ENCODE measurements at regions of chr11 and their contacts with region 1.

Region 1: DNA sequence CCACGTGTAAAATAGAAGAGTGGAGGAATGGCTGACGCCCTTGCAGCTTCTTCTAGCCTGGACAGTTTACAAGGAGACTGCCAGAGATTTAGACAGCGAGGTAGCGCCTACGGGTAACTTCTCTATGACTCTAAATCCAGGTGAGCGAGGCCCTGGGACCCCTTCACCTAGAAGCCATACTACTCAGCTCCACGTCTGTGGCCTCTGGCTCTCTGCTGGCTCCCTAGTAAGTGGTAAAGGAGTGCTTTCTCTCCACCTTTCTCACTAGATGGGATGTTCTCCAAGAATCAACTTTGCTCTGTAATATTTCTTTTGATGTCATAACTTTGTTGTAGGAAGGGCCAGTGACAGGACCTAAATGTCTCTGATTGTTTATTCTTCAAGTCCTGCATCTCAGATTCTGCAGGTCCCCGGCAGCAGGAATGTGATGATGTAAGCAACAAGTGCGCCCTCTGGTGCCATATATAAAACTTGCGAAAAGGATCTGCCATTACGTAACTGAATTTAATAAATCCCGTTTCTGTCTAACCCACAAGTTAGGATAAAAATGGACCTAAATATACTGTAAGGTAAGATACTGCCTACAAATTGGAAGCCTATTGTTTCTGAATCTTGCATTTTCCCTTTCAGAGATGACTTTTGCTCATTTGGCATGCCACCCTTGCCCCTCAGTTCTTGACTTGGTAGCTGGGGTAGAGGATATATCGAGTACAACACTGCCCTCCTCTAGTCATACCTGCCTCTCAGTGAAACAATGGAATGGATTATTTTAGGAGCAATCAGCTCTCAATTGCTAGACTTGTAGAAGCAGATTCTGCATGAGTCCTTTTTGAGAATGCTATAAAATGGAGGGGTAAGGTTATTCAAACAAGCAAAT is 11.0 kb upstream of the PTPN5 start:
- DNase-seq: peak in 6 of 9 donors; percentile 4 to 47 (median 25)
- ATAC-seq: peak; percentile 49
- H3K4me3 ChIP-seq: no peak overlapping the region
- H3K4me3 Mint-ChIP-seq: peak overlapping the region in 2 of 10 donors; percentile 5 to 21
- H3K27ac ChIP-seq: no peak overlapping the region
- H3K27ac Mint-ChIP-seq: peak overlapping the region in 1 of 9 donors; percentile 72
- H3K4me1 ChIP-seq: no peaks in the 10 kb centered on the region
- H3K4me1 Mint-ChIP-seq: peaks cover 0 to 5% (median 4%) of the 10 kb centered on the region in 7 donors
- H3K27me3 ChIP-seq: no peaks in the 10 kb centered on the region
- H3K27me3 Mint-ChIP-seq: peaks cover 5 to 54% (median 8%) of the 10 kb centered on the region in 5 donors

Region 2: GRCh38 chr11:18775492-18776292 is 26.9 kb before region 1 on chr11:
- CTCF ChIA-PET with region 1: no interaction called
- POLR2A ChIA-PET with region 1: no interaction called
- intact Hi-C with region 1: loop called in 1 of 2 experiments (anchors 1 kb)
- DNase-seq: peak in 4 of 9 donors; percentile 6 to 60 (median 16)
- ATAC-seq: no peak
- H3K4me3 ChIP-seq: no peak overlapping the region
- H3K4me3 Mint-ChIP-seq: no peak overlapping the region
- H3K27ac ChIP-seq: no peak overlapping the region
- H3K27ac Mint-ChIP-seq: no peak overlapping the region
- H3K4me1 ChIP-seq: no peaks in the 10 kb centered on the region
- H3K4me1 Mint-ChIP-seq: peaks cover 7 to 23% (median 9%) of the 10 kb centered on the region in 7 donors
- H3K27me3 ChIP-seq: no peaks in the 10 kb centered on the region
- H3K27me3 Mint-ChIP-seq: peaks cover 3 to 18% (median 7%) of the 10 kb centered on the region in 5 donors